Activated CD4-positive, alpha-beta memory T cell treated with anti-CD3 and anti-CD28 coated beads, Interleukin-2, amount 10 ng/mL, durations not matched to agents 7 days and 5 days (primary cell): ENCODE measurements at regions of chr5 and their contacts with region 1.

Region 1: DNA sequence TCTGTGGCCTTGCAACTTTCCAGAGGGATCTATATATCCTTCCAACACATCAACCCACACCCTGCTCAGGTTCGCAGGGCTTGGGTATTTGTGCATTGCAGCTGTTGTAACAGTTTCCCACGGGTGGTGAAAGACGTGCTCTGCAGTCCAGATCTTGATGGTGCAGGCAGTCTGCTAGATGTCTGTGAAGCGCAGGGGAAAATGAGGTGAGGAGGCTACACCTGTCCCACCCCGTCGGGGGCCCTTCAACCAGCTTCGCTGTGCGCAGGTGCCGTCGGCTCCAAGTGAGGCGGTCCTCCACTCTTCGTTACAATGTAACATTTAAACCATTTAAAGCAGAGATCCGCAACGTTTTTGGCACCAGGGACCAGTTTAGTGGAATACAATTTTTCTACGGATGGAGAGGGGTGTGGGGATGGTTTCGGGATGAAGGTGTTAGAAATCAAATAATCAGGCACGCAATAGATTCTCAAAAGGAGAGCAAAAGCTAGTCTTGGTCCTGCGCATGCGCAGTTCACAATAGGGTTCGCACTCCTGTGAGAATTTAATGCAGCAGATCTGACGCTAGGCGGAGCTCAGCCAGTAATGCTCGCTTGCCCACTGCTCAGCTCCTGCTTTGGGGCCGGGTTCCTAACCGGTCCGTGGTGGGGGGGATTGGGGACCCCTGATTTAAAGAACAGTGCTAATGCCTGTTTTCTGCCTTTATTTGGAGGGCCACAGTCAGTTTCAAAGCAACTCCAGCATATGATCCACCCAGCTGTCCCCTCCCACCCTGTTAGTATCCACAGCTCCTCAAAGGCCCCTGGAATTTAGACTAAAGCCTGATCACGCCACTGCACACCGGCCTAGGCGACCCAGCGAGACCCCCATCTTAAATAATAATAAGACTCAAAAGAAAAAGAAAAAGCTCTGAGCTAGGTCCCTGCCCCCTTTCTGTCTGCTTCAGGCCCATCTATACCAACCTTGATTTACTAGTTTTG is 97.1 kb upstream of the SELENOP start:
- DNase-seq: peak; percentile 91
- H3K4me3 Mint-ChIP-seq: peak overlapping the region; percentile 86
- H3K27ac Mint-ChIP-seq: peak overlapping the region; percentile 51
- H3K4me1 Mint-ChIP-seq: peaks cover 16% of the 10 kb centered on the region
- H3K27me3 Mint-ChIP-seq: peaks cover 33% of the 10 kb centered on the region

Region 2: GRCh38 chr5:42889311-42889933 is 19.4 kb before region 1 on chr5:
- CTCF ChIA-PET with region 1: interaction called, 20 read pairs
- POLR2A ChIA-PET with region 1: no interaction called
- DNase-seq: peak; percentile 75
- H3K4me3 Mint-ChIP-seq: no peak overlapping the region
- H3K27ac Mint-ChIP-seq: no peak overlapping the region
- H3K4me1 Mint-ChIP-seq: no peaks in the 10 kb centered on the region
- H3K27me3 Mint-ChIP-seq: peaks cover 15% of the 10 kb centered on the region

Region 3: DNA sequence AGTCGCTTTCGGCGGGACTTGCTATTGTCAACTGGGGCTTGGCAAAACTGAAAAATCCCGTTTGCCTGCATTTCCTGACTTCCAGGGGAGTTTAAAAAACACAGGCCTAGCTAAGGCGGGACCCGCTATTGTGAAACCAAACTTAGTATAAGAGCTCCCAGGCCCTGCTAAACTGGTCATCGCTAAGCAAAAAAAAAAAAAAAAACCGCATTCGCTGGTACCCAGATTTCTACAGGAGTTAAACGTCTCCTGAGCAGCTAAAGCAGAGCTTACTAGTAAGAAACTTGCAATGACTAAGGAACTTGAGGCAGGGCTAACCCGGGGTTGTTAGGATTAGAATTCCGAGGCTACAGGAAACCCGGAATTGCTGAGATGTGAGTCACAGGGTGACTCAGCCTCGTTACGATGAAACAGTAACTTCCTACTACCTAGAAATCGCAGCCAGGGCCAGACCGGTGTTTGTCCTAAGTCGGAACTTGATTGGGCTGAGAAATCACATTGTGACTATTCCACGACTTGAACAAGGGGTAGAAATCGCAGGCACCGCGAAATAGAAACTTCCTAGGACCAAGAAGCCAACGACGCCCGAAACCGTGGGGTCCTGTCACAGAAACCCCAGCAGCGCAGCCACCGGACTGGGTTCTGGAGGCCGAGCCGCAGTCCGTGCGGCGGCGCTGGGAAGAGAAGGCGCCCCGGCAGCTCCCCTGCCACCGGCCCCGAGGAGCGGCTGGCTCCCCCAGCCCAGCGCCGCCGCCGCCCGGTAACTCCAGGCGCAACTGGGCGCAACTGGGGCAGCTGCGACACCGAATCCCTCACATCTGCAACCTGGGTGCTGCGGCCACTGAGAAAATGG is 41.9 kb after region 1 on chr5:
- CTCF ChIA-PET with region 1: interaction called, 59 read pairs
- POLR2A ChIA-PET with region 1: interaction called, 39 read pairs
- DNase-seq: peak; percentile 77
- H3K4me3 Mint-ChIP-seq: peak overlapping the region; percentile 85
- H3K27ac Mint-ChIP-seq: peak overlapping the region; percentile 100
- H3K4me1 Mint-ChIP-seq: peaks cover 37% of the 10 kb centered on the region
- H3K27me3 Mint-ChIP-seq: no peaks in the 10 kb centered on the region

Region 4: GRCh38 chr5:43008369-43009153 is 99.8 kb after region 1 on chr5:
- CTCF ChIA-PET with region 1: interaction called, 11 read pairs
- POLR2A ChIA-PET with region 1: interaction called, 7 read pairs
- DNase-seq: peak; percentile 93
- H3K4me3 Mint-ChIP-seq: peak overlapping the region; percentile 89
- H3K27ac Mint-ChIP-seq: peak overlapping the region; percentile 97
- H3K4me1 Mint-ChIP-seq: peaks cover 39% of the 10 kb centered on the region
- H3K27me3 Mint-ChIP-seq: peaks cover 5% of the 10 kb centered on the region

Region 5: GRCh38 chr5:43040287-43041098 is 131.7 kb after region 1 on chr5 and contains the start of gene ANXA2R:
- CTCF ChIA-PET with region 1: interaction called, 30 read pairs
- POLR2A ChIA-PET with region 1: interaction called, 38 read pairs
- DNase-seq: peak; percentile 96
- H3K4me3 Mint-ChIP-seq: peak within 1 kb of the TSS; percentile 97
- H3K27ac Mint-ChIP-seq: peak within 1 kb of the TSS; percentile 99
- H3K4me1 Mint-ChIP-seq: peaks cover 42% of the 10 kb centered on the region
- H3K27me3 Mint-ChIP-seq: no peaks in the 10 kb centered on the region
- total RNA-seq, gene ANXA2R: 25.1 to 28.3 TPM

Region 6: GRCh38 chr5:43389679-43390329 is 481.0 kb after region 1 on chr5:
- CTCF ChIA-PET with region 1: interaction called, 18 read pairs
- POLR2A ChIA-PET with region 1: interaction called, 3 read pairs
- DNase-seq: peak; percentile 48
- H3K4me3 Mint-ChIP-seq: no peak overlapping the region
- H3K27ac Mint-ChIP-seq: no peak overlapping the region
- H3K4me1 Mint-ChIP-seq: peaks cover 17% of the 10 kb centered on the region
- H3K27me3 Mint-ChIP-seq: no peaks in the 10 kb centered on the region